ENCODE measurements at regions of chr18 and their contacts with region 1.

Region 1: DNA sequence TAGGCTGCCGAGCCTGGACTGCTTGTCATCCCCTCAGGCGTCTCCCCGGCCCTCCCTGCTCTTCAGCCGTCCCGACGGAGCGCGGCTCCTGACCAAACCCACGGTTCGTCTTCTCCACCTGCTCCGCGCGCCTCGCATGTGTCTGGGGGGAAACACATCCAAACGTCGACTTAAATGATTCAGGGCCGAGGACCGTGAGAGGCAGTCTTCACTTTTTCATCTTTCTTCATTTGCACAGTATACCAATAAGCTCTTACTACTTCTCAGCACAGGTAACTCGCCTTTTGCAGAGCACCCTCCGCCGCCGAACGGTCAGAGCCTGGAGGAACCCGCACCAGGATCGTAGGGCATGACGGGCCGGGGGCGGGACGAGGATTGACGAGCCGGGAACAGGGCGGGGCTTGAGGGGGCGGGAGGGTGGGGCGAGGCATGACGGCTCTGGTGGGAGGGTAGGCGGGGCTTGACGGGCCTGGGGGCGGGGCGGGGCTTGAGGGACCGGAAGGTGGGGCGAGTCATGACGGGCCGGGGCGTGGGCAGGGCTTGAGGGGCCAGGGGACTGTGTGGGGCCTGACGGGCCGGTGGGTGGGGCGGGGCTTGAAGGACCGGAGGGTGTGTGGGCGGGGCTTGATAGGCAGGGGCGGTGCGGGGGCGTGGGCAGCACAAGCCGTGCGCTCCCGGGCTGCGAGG is at the start of gene SEH1L:
- DNase-seq: peak; percentile 99
- H3K4me3 ChIP-seq: peak within 1 kb of the TSS; percentile 59 to 83 (median 81)
- H3K27ac ChIP-seq: peak within 1 kb of the TSS; percentile 88 to 98 (median 94)
- H3K4me1 ChIP-seq: peaks cover 12 to 24% of the 10 kb centered on the region in 2 donors
- H3K27me3 ChIP-seq: no peaks in the 10 kb centered on the region
- CTCF ChIP-seq: no peak
- POLR2A ChIP-seq: peak; percentile 10 to 72
- total RNA-seq, gene SEH1L: 26.8 to 48.6 (median 34.9) TPM

Region 2: GRCh38 chr18:12883684-12884405 is 63.7 kb before region 1 on chr18 and contains the start of gene PTPN2:
- intact Hi-C with region 1: loop called (anchors 10 kb)
- DNase-seq: peak; percentile 95
- H3K4me3 ChIP-seq: peak within 1 kb of the TSS; percentile 61 to 90 (median 84)
- H3K27ac ChIP-seq: peak within 1 kb of the TSS; percentile 99 to 100 (median 99)
- H3K4me1 ChIP-seq: peaks cover 10 to 30% of the 10 kb centered on the region in 2 donors
- H3K27me3 ChIP-seq: no peaks in the 10 kb centered on the region
- CTCF ChIP-seq: no peak
- POLR2A ChIP-seq: peak; percentile 81 to 90
- total RNA-seq, gene PTPN2: 33.1 to 45.3 (median 37.7) TPM